ENCODE measurements at regions of chr17 and their contacts with region 1.

Region 1: DNA sequence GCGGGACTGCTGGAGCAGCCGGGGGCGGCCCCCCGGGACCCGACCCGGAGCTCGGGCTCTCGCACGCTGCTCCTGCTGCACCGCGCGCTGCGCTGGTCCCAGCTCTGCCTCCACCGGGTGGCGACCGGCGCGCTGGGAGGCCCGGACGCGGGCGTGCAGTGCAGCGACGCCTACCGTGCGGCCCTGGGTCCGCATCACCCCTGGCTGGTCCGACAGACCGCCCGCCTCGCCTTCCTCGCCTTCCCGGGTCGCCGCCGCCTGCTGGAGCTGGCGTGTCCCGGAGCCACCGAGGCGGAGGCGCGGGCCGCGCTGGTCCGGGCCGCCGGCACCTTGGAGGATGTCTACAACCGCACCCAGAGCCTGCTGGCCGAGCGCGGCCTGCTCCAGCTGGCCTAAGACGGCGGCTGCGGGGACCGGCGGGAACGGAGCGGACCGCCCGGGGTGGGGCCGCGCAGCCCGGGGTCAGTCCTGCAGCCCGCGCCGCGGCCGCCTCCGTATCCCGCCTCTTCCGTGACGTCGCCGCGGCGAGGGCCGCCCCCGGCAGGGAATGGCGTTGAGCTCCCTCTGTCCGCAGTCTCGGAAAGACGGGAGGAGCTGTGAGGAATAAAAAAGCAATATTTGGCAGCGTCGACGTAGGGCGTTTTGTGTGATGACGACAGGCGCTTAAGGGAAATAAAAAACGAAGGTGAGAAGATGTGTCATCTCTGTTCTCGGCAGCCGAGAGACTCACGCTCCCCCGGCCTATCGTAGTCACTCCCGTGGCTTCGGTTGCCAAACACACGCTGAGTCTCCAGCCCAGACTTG is 1.3 kb downstream of the GLTPD2 start:
- DNase-seq: peak; percentile 62 to 91 (median 86)
- H3K4me3 ChIP-seq: peak overlapping the region; percentile 51 to 92 (median 80)
- H3K27ac ChIP-seq: peak overlapping the region; percentile 79 to 99 (median 98)
- H3K27me3 ChIP-seq: peaks cover 0 to 7% (median 0%) of the 10 kb centered on the region in 45 donors
- CTCF ChIP-seq: peak in 55 of 56 donors; percentile 40 to 97 (median 73)

Region 2: GRCh38 chr17:4709794-4710692 is 80.1 kb before region 1 on chr17 and contains the start of gene ARRB2:
- intact Hi-C with region 1: loop called in 1 of 2 experiments (anchors 5 kb)
- DNase-seq: peak; percentile 97 to 99 (median 99)
- H3K4me3 ChIP-seq: peak within 1 kb of the TSS; percentile 65 to 88 (median 80)
- H3K27ac ChIP-seq: peak within 1 kb of the TSS; percentile 7 to 95 (median 89)
- H3K27me3 ChIP-seq: no peaks in the 10 kb centered on the region
- CTCF ChIP-seq: peak in 54 of 56 donors; percentile 28 to 74 (median 54)
- total RNA-seq, gene ARRB2: 66.2 to 131 (median 94.9) TPM

Region 3: DNA sequence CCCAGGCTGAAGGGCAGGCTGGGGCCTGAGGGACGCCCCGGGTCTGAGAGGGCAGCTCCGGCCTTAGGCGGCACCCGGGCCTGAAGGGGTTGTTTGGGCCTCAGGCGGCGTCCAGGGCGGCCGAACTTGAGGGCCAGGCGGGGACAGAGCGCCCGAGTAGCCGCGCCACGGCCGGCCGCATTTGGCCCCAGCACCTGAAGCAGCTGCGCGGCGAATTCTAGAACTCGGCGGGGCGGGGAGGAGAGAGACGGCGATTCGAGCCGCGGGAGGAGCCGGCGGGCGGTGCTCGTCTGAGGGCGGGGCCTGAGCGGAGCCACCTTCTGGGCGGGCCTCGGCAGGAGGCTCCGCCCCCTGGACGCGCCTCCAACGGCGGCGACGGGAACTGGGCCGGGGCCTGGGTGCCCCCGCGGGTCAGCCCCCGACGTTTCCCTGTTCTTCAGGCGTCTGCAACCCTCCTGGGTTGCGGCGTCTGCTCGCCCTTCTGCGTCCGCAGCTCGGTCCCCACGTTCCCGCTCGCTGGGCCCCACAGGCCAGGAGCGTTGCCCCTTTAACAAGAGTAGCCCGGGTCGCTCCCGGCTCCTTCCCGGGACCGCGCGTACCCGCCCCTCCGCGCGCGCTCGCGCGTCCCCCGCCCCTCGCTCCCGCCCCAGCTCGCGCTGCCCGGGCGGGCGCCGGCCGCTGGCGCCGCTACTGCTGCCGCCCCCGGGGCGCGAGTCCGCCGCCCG is 207.4 kb after region 1 on chr17 and contains the starts of genes INCA1 and KIF1C:
- intact Hi-C with region 1: loop called in 1 of 2 experiments (anchors 2 kb)
- DNase-seq: peak; percentile 85 to 97 (median 92)
- H3K4me3 ChIP-seq: peak within 1 kb of the TSS; percentile 65 to 99 (median 93)
- H3K27ac ChIP-seq: peak within 1 kb of the TSS; percentile 81 to 99 (median 95)
- H3K27me3 ChIP-seq: no peaks in the 10 kb centered on the region
- CTCF ChIP-seq: peak in 48 of 56 donors; percentile 8 to 68 (median 41)
- total RNA-seq, gene INCA1: 0.36 to 3.7 (median 2.0) TPM in 118 of 120 experiments, not detected in the others
- total RNA-seq, gene KIF1C: 62.4 to 504 (median 132) TPM